ENCODE measurements at regions of chr1 and their contacts with region 1.

Region 1: DNA sequence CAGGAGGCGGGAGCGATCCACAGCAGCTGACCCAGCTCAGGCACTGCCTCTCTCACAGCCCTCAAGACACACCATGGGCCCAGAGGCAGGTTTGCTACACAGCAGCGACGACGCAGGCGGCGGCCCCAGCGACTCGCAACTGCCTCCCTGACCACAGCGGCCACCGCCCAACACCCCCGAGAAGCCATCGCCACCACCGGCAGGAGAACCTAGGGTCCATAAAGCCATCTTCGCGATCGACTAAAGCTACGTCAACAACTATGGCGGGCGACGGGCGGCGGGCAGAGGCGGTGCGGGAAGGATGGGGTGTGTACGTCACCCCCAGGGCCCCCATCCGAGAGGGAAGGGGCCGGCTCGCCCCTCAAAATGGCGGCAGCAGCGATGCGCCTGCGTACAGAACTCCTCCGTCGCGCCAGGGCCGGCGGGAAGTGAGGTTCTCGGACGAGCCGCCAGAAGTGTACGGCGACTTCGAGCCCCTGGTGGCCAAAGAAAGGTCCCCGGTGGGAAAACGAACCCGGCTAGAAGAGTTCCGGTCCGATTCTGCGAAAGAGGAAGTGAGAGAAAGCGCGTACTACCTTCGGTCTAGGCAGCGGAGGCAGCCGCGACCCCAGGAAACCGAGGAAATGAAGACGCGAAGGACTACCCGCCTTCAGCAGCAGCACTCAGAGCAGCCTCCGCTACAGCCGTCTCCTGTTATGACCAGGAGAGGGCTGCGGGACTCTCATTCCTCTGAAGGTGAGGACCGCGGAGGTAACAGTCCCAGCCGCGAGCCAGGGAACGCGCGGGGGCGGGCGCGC is at the start of gene TOR1AIP1:
- DNase-seq: peak; percentile 99
- H3K4me3 Mint-ChIP-seq: peak within 1 kb of the TSS; percentile 94
- H3K27ac Mint-ChIP-seq: peak within 1 kb of the TSS; percentile 99
- H3K4me1 Mint-ChIP-seq: peaks cover 45% of the 10 kb centered on the region
- H3K27me3 Mint-ChIP-seq: no peaks in the 10 kb centered on the region
- total RNA-seq, gene TOR1AIP1: 69.2 and 77.2 TPM in 2 replicates

Region 2: DNA sequence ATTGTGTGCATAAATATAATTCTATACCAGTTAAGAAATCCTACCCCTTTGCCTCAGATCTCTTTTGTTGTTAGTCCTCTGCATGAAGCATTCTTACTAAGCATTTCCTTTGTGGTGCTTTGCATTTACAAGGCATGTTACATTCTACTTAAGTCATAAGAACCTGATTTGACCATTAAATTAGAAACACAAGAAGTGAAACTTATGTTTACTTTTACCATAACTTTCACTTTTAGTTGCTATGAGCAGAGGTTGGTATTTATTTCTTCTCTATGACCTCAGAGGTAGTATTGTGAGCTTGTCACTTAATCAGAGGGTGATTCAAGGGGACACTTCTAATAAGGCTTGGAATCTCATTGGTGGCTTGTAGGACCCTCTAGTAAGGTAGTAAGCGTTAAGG is 847.7 kb before region 1 on chr1:
- intact Hi-C with region 1: loop called (anchors 5 kb)
- DNase-seq: no peak
- H3K4me3 Mint-ChIP-seq: peak overlapping the region; percentile 62
- H3K27ac Mint-ChIP-seq: peak overlapping the region; percentile 91
- H3K4me1 Mint-ChIP-seq: peaks cover 70% of the 10 kb centered on the region
- H3K27me3 Mint-ChIP-seq: no peaks in the 10 kb centered on the region

Region 3: GRCh38 chr1:179142889-179143299 is 739.5 kb before region 1 on chr1:
- intact Hi-C with region 1: loop called (anchors 5 kb)
- DNase-seq: no peak
- H3K4me3 Mint-ChIP-seq: peak overlapping the region; percentile 63
- H3K27ac Mint-ChIP-seq: peak overlapping the region; percentile 81
- H3K4me1 Mint-ChIP-seq: peaks cover 30% of the 10 kb centered on the region
- H3K27me3 Mint-ChIP-seq: no peaks in the 10 kb centered on the region

Region 4: GRCh38 chr1:179926494-179927205 is 44.2 kb after region 1 on chr1:
- intact Hi-C with region 1: no loop called
- DNase-seq: no peak
- H3K4me3 Mint-ChIP-seq: no peak overlapping the region
- H3K27ac Mint-ChIP-seq: no peak overlapping the region
- H3K4me1 Mint-ChIP-seq: no peaks in the 10 kb centered on the region
- H3K27me3 Mint-ChIP-seq: peaks cover 3% of the 10 kb centered on the region

Region 5: GRCh38 chr1:179954493-179955297 is 72.3 kb after region 1 on chr1 and contains the start of gene CEP350:
- intact Hi-C with region 1: loop called (anchors 1 kb)
- DNase-seq: peak; percentile 99
- H3K4me3 Mint-ChIP-seq: peak within 1 kb of the TSS; percentile 88
- H3K27ac Mint-ChIP-seq: peak within 1 kb of the TSS; percentile 94
- H3K4me1 Mint-ChIP-seq: peaks cover 32% of the 10 kb centered on the region
- H3K27me3 Mint-ChIP-seq: no peaks in the 10 kb centered on the region
- total RNA-seq, gene CEP350: 35.0 and 43.6 TPM in 2 replicates

Region 6: DNA sequence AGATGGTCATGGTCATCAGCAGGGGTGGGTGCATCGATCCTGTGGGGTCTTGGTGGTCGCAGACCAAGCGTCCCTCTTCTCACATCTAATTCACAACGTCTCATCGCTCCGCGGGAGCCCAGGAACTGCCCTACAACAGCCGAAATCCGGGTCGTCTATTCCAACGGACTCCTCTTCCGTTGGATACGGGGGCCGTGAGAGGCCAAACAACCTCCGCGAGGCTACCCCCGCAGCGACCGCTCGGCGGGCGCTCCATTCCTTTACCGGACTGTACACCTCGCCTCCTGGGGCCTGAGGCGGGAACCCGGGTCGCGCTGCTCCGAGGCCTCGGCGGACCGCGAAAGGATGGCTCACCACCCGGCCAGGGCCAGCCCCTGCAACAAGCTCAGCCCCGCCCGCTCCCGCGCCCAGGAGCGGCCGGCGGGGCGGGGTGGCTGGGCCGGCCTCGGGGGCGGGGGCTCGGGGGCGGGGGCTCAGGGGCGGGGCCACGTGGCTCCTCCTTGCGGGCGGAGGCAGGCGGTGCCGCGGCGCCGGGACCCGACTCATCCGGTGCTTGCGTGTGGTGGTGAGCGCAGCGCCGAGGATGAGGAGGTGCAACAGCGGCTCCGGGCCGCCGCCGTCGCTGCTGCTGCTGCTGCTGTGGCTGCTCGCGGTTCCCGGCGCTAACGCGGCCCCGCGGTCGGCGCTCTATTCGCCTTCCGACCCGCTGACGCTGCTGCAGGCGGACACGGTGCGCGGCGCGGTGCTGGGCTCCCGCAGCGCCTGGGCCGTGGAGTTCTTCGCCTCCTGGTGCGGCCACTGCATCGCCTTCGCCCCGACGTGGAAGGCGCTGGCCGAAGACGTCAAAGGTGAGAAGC is 272.1 kb after region 1 on chr1 and contains the start of gene QSOX1:
- intact Hi-C with region 1: loop called (anchors 1 kb)
- DNase-seq: peak; percentile 96
- H3K4me3 Mint-ChIP-seq: peak within 1 kb of the TSS; percentile 95
- H3K27ac Mint-ChIP-seq: peak within 1 kb of the TSS; percentile 93
- H3K4me1 Mint-ChIP-seq: peaks cover 29% of the 10 kb centered on the region
- H3K27me3 Mint-ChIP-seq: no peaks in the 10 kb centered on the region
- total RNA-seq, gene QSOX1: 54.2 and 56.2 TPM in 2 replicates

Region 7: DNA sequence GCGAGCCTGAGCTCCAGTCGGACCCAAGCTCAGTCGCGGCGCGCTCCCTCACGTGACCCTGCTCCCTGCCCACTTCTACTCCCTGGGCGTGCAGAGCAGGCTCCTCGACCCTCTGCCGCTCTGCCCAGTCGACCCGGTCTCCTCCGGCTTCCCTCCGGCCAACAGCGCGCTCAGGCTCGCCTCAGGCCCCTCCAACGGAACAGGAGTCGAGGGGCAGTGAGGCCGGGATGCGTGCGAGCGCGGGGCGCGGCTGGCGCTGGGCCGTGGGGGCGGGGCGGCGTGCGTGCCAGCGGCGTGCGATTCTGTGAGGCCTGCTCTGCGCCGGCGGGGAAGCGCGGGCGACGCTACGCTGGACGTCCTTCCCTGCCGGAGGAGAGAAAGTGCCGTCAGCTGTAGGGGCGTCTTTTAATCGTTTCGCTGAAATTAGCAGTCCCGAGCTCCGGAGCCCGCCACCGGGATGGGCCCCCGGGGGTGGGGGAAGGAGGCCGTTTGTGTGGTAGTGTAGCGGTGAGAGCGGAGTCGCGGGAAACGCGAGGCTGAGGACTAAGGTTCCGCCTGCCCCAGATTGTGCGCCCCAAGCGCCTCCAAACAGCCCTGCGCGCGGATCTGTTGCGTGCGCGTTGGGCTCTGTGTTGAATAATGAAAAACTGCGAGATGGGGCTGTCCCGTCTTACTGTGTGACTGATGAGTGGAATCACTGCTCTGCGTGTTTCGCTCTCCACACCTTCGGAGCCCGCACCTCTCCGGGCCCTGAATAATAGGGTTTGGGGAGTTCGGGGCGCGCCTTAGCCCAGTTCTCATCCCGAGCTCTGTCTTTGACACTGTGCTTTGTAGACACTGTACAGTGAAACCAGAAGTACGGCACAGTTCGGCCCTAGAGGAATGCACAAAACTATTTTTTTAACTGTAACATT is 620.2 kb after region 1 on chr1 and contains the start of gene ACBD6:
- intact Hi-C with region 1: loop called (anchors 1 kb)
- DNase-seq: peak; percentile 96
- H3K4me3 Mint-ChIP-seq: peak within 1 kb of the TSS; percentile 97
- H3K27ac Mint-ChIP-seq: peak within 1 kb of the TSS; percentile 97
- H3K4me1 Mint-ChIP-seq: peaks cover 20% of the 10 kb centered on the region
- H3K27me3 Mint-ChIP-seq: peaks cover 5% of the 10 kb centered on the region
- total RNA-seq, gene ACBD6: 49.8 and 54.7 TPM in 2 replicates

Region 8: GRCh38 chr1:181021811-181022434 is 1139.5 kb after region 1 on chr1:
- intact Hi-C with region 1: loop called (anchors 5 kb)
- DNase-seq: peak; percentile 84
- H3K4me3 Mint-ChIP-seq: peak overlapping the region; percentile 96
- H3K27ac Mint-ChIP-seq: peak overlapping the region; percentile 96
- H3K4me1 Mint-ChIP-seq: peaks cover 38% of the 10 kb centered on the region
- H3K27me3 Mint-ChIP-seq: peaks cover 21% of the 10 kb centered on the region

Measured in activated CD4-positive, alpha-beta T cell treated with anti-CD3 and anti-CD28 coated beads, Interleukin-2, amount 10 ng/mL, durations not matched to agents 24 days and 14 days (primary cell).